Panc1 (cell line): ENCODE measurements at regions of chr5 and their contacts with region 1.

Region 1: DNA sequence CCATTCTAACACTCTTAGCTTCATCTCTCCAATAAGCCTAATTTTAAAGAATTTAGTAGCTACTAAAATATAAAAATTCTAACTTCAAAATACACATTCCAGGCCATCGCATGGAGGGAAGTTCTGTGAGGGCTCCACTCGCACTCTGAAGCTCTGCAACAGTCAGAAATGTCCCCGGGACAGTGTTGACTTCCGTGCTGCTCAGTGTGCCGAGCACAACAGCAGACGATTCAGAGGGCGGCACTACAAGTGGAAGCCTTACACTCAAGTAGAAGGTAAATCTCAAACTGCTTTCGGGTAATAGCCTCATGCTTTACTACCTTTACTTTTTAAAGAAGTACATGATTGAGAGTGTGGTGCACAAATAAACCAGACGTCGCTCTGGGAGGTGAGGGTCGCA is 94.8 kb downstream of the ADAMTS16 start:
- DNase-seq: no peak
- ATAC-seq: no peak
- H3K4me3 ChIP-seq: no peak overlapping the region
- H3K27ac ChIP-seq: no peak overlapping the region
- H3K4me1 ChIP-seq: no peaks in the 10 kb centered on the region
- H3K27me3 ChIP-seq: no peaks in the 10 kb centered on the region
- CTCF ChIP-seq: no peak

Region 2: GRCh38 chr5:5304361-5305020 is 69.6 kb after region 1 on chr5:
- CTCF ChIA-PET with region 1: no interaction called
- POLR2A ChIA-PET with region 1: interaction called, 13 read pairs
- in situ Hi-C with region 1: no loop called
- intact Hi-C with region 1: no loop called
- DNase-seq: peak; percentile 12
- ATAC-seq: peak; percentile 68
- H3K4me3 ChIP-seq: no peak overlapping the region
- H3K27ac ChIP-seq: no peak overlapping the region
- H3K4me1 ChIP-seq: no peaks in the 10 kb centered on the region
- H3K27me3 ChIP-seq: no peaks in the 10 kb centered on the region
- CTCF ChIP-seq: no peak